Activated CD4-positive, alpha-beta T cell treated with anti-CD3 and anti-CD28 coated beads for 36 hours (primary cell): ENCODE measurements at regions of chr1 and their contacts with region 1.

Region 1: GRCh38 chr1:229479660-229480399 is 28.3 kb downstream of the NUP133 start:
- DNase-seq: no peak
- ATAC-seq: no peak
- H3K4me3 Mint-ChIP-seq: no peak overlapping the region
- H3K27ac Mint-ChIP-seq: no peak overlapping the region
- H3K4me1 Mint-ChIP-seq: peaks cover 3% of the 10 kb centered on the region
- H3K27me3 Mint-ChIP-seq: no peaks in the 10 kb centered on the region

Region 2: GRCh38 chr1:229466887-229467286 is 12.9 kb before region 1 on chr1:
- CTCF ChIA-PET with region 1: interaction called, 14 read pairs
- POLR2A ChIA-PET with region 1: no interaction called
- intact Hi-C with region 1: no loop called
- DNase-seq: no peak
- ATAC-seq: no peak
- H3K4me3 Mint-ChIP-seq: no peak overlapping the region
- H3K27ac Mint-ChIP-seq: no peak overlapping the region
- H3K4me1 Mint-ChIP-seq: no peaks in the 10 kb centered on the region
- H3K27me3 Mint-ChIP-seq: no peaks in the 10 kb centered on the region

Region 3: GRCh38 chr1:229495782-229496181 is 16.0 kb after region 1 on chr1:
- CTCF ChIA-PET with region 1: interaction called, 20 read pairs
- POLR2A ChIA-PET with region 1: no interaction called
- intact Hi-C with region 1: no loop called
- DNase-seq: no peak
- ATAC-seq: no peak
- H3K4me3 Mint-ChIP-seq: no peak overlapping the region
- H3K27ac Mint-ChIP-seq: no peak overlapping the region
- H3K4me1 Mint-ChIP-seq: no peaks in the 10 kb centered on the region
- H3K27me3 Mint-ChIP-seq: no peaks in the 10 kb centered on the region

Region 4: GRCh38 chr1:229578168-229579058 is 98.6 kb after region 1 on chr1:
- CTCF ChIA-PET with region 1: no interaction called
- POLR2A ChIA-PET with region 1: no interaction called
- intact Hi-C with region 1: no loop called
- DNase-seq: no peak
- ATAC-seq: no peak
- H3K4me3 Mint-ChIP-seq: no peak overlapping the region
- H3K27ac Mint-ChIP-seq: no peak overlapping the region
- H3K4me1 Mint-ChIP-seq: no peaks in the 10 kb centered on the region
- H3K27me3 Mint-ChIP-seq: peaks cover 5% of the 10 kb centered on the region